Ovary (tissue), 10 donors: ENCODE measurements at regions of chr17 and their contacts with region 1.

Region 1: DNA sequence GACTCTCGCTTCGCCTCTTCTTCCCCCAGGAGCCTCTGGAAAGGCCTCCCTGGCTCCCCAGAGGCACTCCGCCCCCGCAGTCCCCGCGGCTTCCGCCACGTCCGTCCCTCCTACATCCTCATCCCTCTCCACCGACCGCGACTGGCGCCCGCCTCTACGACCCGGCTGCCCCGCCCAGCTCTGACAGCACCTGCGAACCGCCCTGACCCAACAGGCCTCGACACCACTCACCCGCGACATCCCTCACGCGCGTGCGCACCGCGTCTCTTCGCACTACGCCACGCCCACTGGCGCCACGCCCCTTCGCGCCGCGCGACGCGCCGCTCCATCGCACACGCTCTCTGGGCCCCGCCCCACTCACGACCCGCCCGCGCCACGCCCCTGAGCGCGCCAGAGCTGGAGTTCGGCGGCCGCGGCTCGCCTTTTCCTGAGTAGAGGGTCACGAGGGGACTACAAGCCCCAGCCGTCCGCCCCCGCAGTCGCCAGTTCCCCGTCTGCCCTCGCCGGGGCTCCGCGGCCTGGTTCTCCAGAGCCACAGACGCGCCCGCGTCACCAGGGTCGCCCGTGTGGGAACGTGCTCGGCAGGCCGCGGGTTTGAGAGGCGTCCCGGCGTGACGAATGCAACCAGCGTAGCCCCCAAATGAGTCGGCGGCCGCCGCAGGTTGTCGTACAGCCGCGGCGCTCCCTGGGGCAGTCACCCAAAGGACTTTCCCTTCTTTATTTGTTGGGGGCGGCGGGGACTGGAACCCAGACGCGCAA is 56.2 kb upstream of the LRRC37A3 start:
- DNase-seq: peak; percentile 92 to 98 (median 96)
- H3K4me3 ChIP-seq: peak overlapping the region; percentile 47
- H3K27ac ChIP-seq: peak overlapping the region; percentile 73 to 91
- H3K4me1 ChIP-seq: peaks cover 3% of the 10 kb centered on the region
- H3K27me3 ChIP-seq: no peaks in the 10 kb centered on the region
- CTCF ChIP-seq: peak in 1 of 3 donors; percentile 21
- EP300 ChIP-seq: no peak
- POLR2A ChIP-seq: peak; percentile 90

Region 2: GRCh38 chr17:65055348-65056261 is 80.1 kb after region 1 on chr17:
- intact Hi-C with region 1: loop called in 1 of 4 experiments (anchors 5 kb)
- DNase-seq: peak; percentile 57 to 69 (median 67)
- H3K4me3 ChIP-seq: peak overlapping the region; percentile 92
- H3K27ac ChIP-seq: peak overlapping the region; percentile 91
- H3K4me1 ChIP-seq: peaks cover 4% of the 10 kb centered on the region
- H3K27me3 ChIP-seq: no peaks in the 10 kb centered on the region
- CTCF ChIP-seq: no peak
- EP300 ChIP-seq: no peak
- POLR2A ChIP-seq: no peak

Region 3: DNA sequence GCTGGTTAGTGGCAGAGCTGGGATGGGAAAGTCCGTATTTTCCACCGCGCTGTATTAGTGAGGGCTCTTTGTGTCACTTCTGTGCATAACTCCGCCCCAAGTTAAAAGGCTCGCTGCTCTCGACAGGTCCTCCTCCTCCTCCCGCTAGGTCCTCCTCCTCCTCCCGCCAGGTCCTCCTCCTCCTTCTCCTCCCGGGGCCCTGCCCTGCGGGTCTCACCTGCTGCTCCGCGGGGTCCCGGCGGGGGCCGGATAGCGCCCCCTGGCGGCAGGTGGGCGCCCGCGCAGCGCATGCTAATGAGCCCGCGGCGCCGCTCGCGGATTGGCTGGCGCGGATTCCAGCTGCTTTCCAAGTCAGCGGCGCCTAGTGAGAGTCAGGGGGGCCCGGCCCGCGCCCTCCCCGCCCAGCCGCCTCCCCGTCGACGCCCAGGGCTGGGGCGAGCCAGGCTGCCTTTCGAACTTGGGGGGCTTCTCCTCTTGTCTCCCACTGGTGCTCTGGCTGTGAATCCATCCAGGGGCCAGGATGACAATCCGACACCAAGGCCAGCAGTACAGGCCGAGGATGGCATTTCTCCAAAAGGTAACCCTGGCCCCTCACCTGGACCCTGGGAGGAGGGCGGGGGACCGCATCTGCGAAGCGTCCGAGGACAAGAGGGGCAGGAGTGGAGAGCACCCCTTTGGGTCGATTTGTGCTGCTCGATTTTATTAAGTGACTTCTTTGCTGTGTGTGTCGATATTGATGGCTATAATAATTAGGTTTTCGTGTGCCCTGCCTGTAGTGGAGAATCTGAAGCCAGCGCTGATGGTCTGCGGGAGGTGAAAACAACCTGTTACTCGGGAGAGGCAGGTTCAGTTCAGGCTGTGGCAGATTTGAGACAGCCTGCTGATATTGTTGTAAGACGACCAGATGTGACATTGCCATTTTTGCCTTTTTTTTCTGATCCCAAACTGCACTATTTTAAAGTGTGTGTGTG is 161.8 kb after region 1 on chr17 and contains the start of gene RGS9:
- intact Hi-C with region 1: loop called in 1 of 4 experiments (anchors 10 kb)
- DNase-seq: peak; percentile 86 to 94 (median 91)
- H3K4me3 ChIP-seq: peak within 1 kb of the TSS; percentile 42
- H3K27ac ChIP-seq: no peak within 1 kb of the TSS
- H3K4me1 ChIP-seq: no peaks in the 10 kb centered on the region
- H3K27me3 ChIP-seq: no peaks in the 10 kb centered on the region
- CTCF ChIP-seq: peak; percentile 96 to 98 (median 98)
- EP300 ChIP-seq: no peak
- POLR2A ChIP-seq: no peak
- total RNA-seq, gene RGS9: 5.3 to 15.7 (median 9.1) TPM